ENCODE measurements at regions of chr10 and their contacts with region 1.

Region 1: DNA sequence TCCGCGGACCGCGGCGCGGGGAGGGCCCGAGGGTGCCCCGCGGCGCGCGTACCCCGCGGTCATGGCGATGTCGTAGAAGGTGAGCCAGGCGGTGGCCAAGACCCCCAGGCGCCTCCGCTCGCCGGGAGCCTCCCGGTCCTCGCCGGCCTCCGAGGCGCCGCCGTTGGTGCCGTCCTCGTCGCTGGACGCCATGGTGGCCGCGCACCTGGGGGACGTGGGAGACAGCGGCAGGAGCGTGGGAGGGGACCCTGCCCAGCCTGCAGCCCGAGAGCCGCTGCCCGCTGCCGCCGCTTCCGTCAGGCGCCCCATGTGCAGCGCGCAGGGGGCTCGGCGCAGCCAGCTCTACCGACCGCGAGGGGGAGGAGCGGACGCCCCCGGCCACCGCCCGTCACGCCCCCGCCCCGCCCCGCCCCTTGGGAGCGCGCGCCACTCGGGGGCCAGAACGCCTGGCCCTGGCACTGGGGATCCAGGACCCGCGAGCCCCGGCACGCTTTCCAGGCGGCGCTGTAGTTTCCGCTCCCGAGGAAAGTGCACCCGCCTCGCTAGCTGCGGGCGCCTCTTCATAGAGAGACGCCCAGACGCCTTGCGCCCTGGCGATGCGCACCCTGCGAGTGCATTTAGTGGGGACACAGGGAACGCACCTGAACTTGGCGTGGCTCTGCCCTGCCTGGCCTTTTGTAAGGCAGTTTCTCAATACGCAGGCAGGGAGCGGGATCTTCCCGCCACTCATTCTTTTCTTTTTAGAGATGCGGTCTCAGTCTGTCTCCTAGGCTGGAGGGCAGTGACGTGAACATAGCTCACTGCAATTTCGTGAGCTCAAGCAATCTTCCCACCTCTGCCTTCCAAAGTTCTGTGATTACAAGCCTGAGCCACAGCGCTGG is at the start of gene HACD1:
- DNase-seq: peak; percentile 66
- H3K4me3 Mint-ChIP-seq: peak within 1 kb of the TSS; percentile 76
- H3K27ac Mint-ChIP-seq: peak within 1 kb of the TSS; percentile 30
- H3K4me1 Mint-ChIP-seq: no peaks in the 10 kb centered on the region
- H3K27me3 Mint-ChIP-seq: no peaks in the 10 kb centered on the region
- CTCF ChIP-seq: no peak
- total RNA-seq, gene HACD1: 13.2 and 17.3 TPM in 2 replicates

Region 2: DNA sequence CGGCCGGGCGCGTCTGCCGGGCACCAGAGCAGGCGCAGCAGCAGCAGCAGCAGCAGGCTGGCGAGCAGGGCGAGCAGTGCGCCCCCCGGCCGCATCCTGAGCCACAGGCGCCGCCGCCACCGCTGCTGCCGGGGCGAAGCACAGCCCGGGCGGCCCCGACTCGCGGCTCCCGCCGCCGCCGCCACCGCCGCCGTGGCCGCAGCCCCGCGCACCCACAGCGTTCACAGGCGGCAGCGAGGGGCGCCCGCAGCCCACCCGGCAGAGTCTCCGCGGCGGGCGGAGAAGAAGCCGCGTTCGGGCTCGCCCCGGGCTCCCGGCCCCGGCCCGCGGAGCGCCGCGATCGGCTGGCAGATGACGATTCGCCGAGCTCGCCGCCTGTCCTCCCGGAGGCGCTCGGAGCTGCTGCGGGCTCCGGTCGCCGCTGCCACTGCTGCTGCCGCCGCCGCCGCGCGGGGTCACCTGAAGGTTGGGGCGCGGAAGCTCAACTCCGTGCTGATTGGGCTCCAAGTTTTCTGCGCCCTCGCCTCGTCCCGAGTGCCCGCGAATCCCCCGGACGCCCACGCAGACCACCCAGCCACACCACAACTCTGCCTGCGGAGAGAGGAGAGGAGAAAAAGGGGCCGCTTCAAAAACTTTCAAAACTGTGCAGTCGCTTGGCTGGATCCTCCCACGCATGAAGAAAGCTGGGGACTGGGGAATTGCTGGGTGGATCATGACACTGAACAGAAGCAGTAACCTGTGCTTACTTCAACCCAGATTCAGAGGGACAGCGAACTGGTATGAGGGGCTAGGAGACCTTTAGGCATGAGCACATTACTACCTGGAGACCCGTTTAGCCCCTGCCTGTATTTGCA is 162.9 kb before region 1 on chr10 and contains the start of gene ST8SIA6:
- CTCF ChIA-PET with region 1: no interaction called
- intact Hi-C with region 1: no loop called
- DNase-seq: peak; percentile 63
- H3K4me3 Mint-ChIP-seq: peak within 1 kb of the TSS; percentile 81
- H3K27ac Mint-ChIP-seq: peak within 1 kb of the TSS; percentile 33
- H3K4me1 Mint-ChIP-seq: no peaks in the 10 kb centered on the region
- H3K27me3 Mint-ChIP-seq: peaks cover 37% of the 10 kb centered on the region
- CTCF ChIP-seq: no peak
- total RNA-seq, gene ST8SIA6: 0.14 TPM in 1 of 2 replicates, not detected in the other

Region 3: GRCh38 chr10:17516376-17516775 is 100.9 kb before region 1 on chr10:
- CTCF ChIA-PET with region 1: no interaction called
- intact Hi-C with region 1: no loop called
- DNase-seq: no peak
- H3K4me3 Mint-ChIP-seq: no peak overlapping the region
- H3K27ac Mint-ChIP-seq: no peak overlapping the region
- H3K4me1 Mint-ChIP-seq: peaks cover 13% of the 10 kb centered on the region
- H3K27me3 Mint-ChIP-seq: no peaks in the 10 kb centered on the region
- CTCF ChIP-seq: no peak

Region 4: GRCh38 chr10:17684537-17684936 is 67.3 kb after region 1 on chr10:
- CTCF ChIA-PET with region 1: no interaction called
- intact Hi-C with region 1: loop called (anchors 5 kb)
- DNase-seq: no peak
- H3K4me3 Mint-ChIP-seq: no peak overlapping the region
- H3K27ac Mint-ChIP-seq: no peak overlapping the region
- H3K4me1 Mint-ChIP-seq: no peaks in the 10 kb centered on the region
- H3K27me3 Mint-ChIP-seq: no peaks in the 10 kb centered on the region
- CTCF ChIP-seq: no peak

Region 5: GRCh38 chr10:17742918-17743317 is 125.6 kb after region 1 on chr10:
- CTCF ChIA-PET with region 1: interaction called, 3 read pairs
- intact Hi-C with region 1: loop called (anchors 1 kb)
- DNase-seq: peak; percentile 64
- H3K4me3 Mint-ChIP-seq: no peak overlapping the region
- H3K27ac Mint-ChIP-seq: no peak overlapping the region
- H3K4me1 Mint-ChIP-seq: no peaks in the 10 kb centered on the region
- H3K27me3 Mint-ChIP-seq: no peaks in the 10 kb centered on the region
- CTCF ChIP-seq: peak; percentile 67

Measured in Calu3 (cell line).